GM12878 (cell line): ENCODE measurements at regions of chr14 and their contacts with region 1.

Region 1: GRCh38 chr14:96380735-96381134 is 11.2 kb upstream of the AK7 start:
- DNase-seq: peak; percentile 62
- ATAC-seq: peak; percentile 97
- H3K4me3 ChIP-seq: no peak overlapping the region; the same call in 1 of the 2 replicates
- H3K27ac ChIP-seq: no peak overlapping the region
- H3K4me1 ChIP-seq: peaks cover 4% of the 10 kb centered on the region; the same call in 1 of the 2 replicates
- H3K27me3 ChIP-seq: no peaks in the 10 kb centered on the region
- CTCF ChIP-seq: no peak
- EP300 ChIP-seq: no peak
- POLR2A ChIP-seq: no peak
- RAD21 ChIP-seq: no peak

Region 2: GRCh38 chr14:96368534-96368933 is 12.2 kb before region 1 on chr14:
- CTCF ChIA-PET with region 1: interaction called, 5 read pairs
- POLR2A ChIA-PET with region 1: interaction called, 7 read pairs
- RAD21 ChIA-PET with region 1: interaction called, 5 read pairs
- SMC1A ChIA-PET with region 1: interaction called, 15 read pairs
- in situ Hi-C with region 1: no loop called
- intact Hi-C with region 1: no loop called
- DNase-seq: no peak
- ATAC-seq: no peak
- H3K4me3 ChIP-seq: no peak overlapping the region
- H3K27ac ChIP-seq: no peak overlapping the region
- H3K4me1 ChIP-seq: peaks cover 6% of the 10 kb centered on the region
- H3K27me3 ChIP-seq: no peaks in the 10 kb centered on the region
- CTCF ChIP-seq: no peak
- EP300 ChIP-seq: no peak
- POLR2A ChIP-seq: no peak
- RAD21 ChIP-seq: no peak